Vagina (tissue), 2 donors: ENCODE measurements at regions of chr6 and their contacts with region 1.

Region 1: DNA sequence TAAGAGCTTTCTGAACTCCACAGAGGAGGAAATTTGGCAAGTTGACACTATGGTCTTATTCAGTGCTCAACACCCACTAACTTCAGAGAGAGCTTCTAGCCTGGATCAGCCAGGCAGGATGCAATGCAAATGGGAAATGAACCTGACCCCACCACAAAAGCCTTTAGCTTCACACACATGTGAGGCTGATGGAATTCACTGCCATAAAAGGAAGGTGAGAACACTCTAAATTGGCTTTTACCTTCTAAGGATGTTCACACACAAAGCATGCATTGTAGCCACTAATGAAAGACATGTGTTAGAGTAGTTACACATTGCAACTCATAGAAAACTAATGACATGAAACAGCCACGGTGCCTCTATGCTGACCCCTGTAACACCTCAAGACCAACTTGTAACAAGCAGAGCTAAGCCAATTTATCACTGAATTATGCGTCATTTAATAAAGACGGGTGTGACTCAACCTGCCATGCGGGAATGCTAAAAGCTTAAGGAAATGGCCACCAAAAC is 262.1 kb downstream of the HACE1 start:
- DNase-seq: no peak
- H3K4me3 ChIP-seq: no peak overlapping the region
- H3K27ac ChIP-seq: no peak overlapping the region
- H3K4me1 ChIP-seq: peaks cover 13% of the 10 kb centered on the region
- H3K27me3 ChIP-seq: no peaks in the 10 kb centered on the region
- CTCF ChIP-seq: no peak
- POLR2A ChIP-seq: no peak

Region 2: DNA sequence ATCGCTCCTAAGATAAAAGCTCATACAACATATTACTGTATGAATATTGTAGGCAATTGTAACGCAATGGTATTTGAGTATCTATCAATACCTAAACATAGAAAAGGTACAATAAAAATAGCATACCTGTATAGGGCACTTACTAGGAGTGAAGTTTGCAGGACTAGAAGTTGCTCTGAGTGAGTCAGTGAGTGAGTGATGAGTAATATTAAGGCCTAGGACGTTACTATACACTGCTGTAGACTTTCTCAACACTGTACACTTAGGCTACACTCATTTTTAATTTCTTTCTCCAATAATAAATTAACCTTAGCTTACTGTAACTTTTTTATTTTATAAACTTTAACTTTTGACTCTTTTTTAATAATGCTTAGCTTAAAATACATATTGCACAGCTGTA is 284.7 kb before region 1 on chr6:
- intact Hi-C with region 1: loop called (anchors 5 kb)
- DNase-seq: no peak
- H3K4me3 ChIP-seq: no peak overlapping the region
- H3K27ac ChIP-seq: no peak overlapping the region
- H3K4me1 ChIP-seq: no peaks in the 10 kb centered on the region
- H3K27me3 ChIP-seq: no peaks in the 10 kb centered on the region
- CTCF ChIP-seq: no peak
- POLR2A ChIP-seq: no peak